ENCODE measurements at regions of chr21 and their contacts with region 1.

Region 1: DNA sequence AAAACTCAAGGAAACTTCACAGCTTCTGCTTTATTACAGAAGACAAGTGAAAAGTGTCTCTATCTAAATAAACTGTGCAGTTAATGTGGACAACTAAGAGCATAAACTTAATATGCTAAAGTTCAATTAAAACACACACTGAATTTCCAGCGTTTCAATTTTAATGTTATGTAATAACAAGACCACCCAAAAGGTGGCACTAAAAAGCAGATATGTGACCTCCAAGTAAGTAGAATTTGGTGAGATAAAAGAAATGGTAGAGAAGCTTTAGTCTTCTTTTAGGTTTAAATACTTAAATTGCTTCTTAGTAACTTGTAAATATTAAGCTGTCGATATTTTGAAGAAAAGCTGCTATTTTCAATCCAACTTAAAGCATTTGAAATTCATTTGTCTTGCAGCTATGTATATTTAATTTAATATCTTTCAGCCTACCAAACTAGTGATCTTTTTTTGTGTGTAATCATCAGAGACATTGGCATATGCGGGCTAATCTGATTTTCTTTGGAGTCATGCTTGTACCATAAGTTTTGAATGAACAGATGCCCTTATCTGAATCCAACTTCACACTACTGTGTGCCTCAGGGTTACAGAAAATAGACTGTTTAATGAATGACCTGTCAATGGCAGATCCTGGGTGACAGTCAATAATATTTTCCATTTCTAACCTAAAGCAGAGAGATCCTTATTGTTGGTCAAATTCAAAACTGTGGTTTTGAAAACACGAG is 36.5 kb upstream of the ADAMTS1 start:
- DNase-seq: peak; percentile 39
- ATAC-seq: peak; percentile 53; the same call in 1 of the 2 replicates
- H3K4me3 ChIP-seq: no peak overlapping the region
- H3K27ac ChIP-seq: no peak overlapping the region
- H3K4me1 ChIP-seq: no peaks in the 10 kb centered on the region; the same call in 1 of the 2 replicates
- H3K27me3 ChIP-seq: no peaks in the 10 kb centered on the region
- CTCF ChIP-seq: peak; percentile 48
- POLR2A ChIP-seq: no peak
- RAD21 ChIP-seq: peak; percentile 66

Region 2: GRCh38 chr21:27213303-27213702 is 331.6 kb after region 1 on chr21:
- CTCF ChIA-PET with region 1: interaction called, 13 read pairs
- POLR2A ChIA-PET with region 1: no interaction called
- dilution Hi-C with region 1: no loop called
- in situ Hi-C with region 1: no loop called
- intact Hi-C with region 1: no loop called
- DNase-seq: peak; percentile 36
- ATAC-seq: no peak
- H3K4me3 ChIP-seq: no peak overlapping the region
- H3K27ac ChIP-seq: no peak overlapping the region
- H3K4me1 ChIP-seq: no peaks in the 10 kb centered on the region
- H3K27me3 ChIP-seq: no peaks in the 10 kb centered on the region
- CTCF ChIP-seq: peak; percentile 40
- POLR2A ChIP-seq: no peak
- RAD21 ChIP-seq: peak; percentile 46

Region 3: GRCh38 chr21:27257908-27258556 is 376.4 kb after region 1 on chr21:
- CTCF ChIA-PET with region 1: no interaction called
- POLR2A ChIA-PET with region 1: no interaction called
- dilution Hi-C with region 1: no loop called
- in situ Hi-C with region 1: no loop called
- intact Hi-C with region 1: no loop called
- DNase-seq: no peak
- ATAC-seq: no peak
- H3K4me3 ChIP-seq: no peak overlapping the region
- H3K27ac ChIP-seq: no peak overlapping the region
- H3K4me1 ChIP-seq: no peaks in the 10 kb centered on the region
- H3K27me3 ChIP-seq: no peaks in the 10 kb centered on the region
- CTCF ChIP-seq: no peak
- POLR2A ChIP-seq: no peak
- RAD21 ChIP-seq: no peak

Region 4: DNA sequence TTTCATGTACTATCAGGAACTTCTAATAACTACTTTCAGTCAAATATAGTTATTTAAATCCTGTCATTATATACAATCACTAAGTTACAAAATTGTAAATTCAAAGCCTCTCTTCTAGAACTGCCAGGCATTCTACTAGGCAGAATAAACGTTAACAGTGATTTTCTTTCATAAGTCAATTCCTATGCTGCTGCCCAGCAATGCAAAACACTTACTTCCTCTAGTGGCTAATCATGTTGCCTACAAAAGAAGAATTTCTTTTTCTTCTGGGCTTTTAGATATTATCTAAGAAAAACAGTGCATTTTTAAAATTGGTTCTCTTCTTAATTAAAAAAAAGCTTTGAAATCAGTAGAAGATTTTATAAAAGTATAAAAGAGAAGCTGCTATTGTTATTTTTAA is 595.0 kb after region 1 on chr21:
- CTCF ChIA-PET with region 1: no interaction called
- POLR2A ChIA-PET with region 1: no interaction called
- dilution Hi-C with region 1: no loop called
- in situ Hi-C with region 1: no loop called
- intact Hi-C with region 1: loop called (anchors 5 kb)
- DNase-seq: peak; percentile 62
- ATAC-seq: peak; percentile 83
- H3K4me3 ChIP-seq: no peak overlapping the region
- H3K27ac ChIP-seq: no peak overlapping the region
- H3K4me1 ChIP-seq: peaks cover 6% of the 10 kb centered on the region
- H3K27me3 ChIP-seq: no peaks in the 10 kb centered on the region
- CTCF ChIP-seq: peak; percentile 61
- POLR2A ChIP-seq: no peak
- RAD21 ChIP-seq: peak; percentile 74

Measured in IMR-90 (cell line).